B cell (primary cell): ENCODE measurements at regions of chr7 and their contacts with region 1.

Region 1: GRCh38 chr7:44082541-44083207 is 344 bp upstream of the POLM start:
- DNase-seq: no peak
- ATAC-seq: peak; percentile 91
- H3K4me3 ChIP-seq: peak overlapping the region; percentile 26 to 77 (median 66)
- H3K4me3 Mint-ChIP-seq: peak overlapping the region; percentile 84
- H3K27ac ChIP-seq: peak overlapping the region; percentile 77 to 92
- H3K27ac Mint-ChIP-seq: peak overlapping the region; percentile 93
- H3K4me1 ChIP-seq: peaks cover 38 to 43% of the 10 kb centered on the region in 2 donors
- H3K4me1 Mint-ChIP-seq: peaks cover 45% of the 10 kb centered on the region
- H3K27me3 ChIP-seq: no peaks in the 10 kb centered on the region
- H3K27me3 Mint-ChIP-seq: no peaks in the 10 kb centered on the region
- CTCF ChIP-seq: peak; percentile 34

Region 2: GRCh38 chr7:43362652-43363034 is 720.0 kb before region 1 on chr7:
- CTCF ChIA-PET with region 1: no interaction called
- POLR2A ChIA-PET with region 1: no interaction called
- intact Hi-C with region 1: no loop called
- DNase-seq: no peak
- ATAC-seq: no peak
- H3K4me3 ChIP-seq: no peak overlapping the region
- H3K4me3 Mint-ChIP-seq: no peak overlapping the region
- H3K27ac ChIP-seq: no peak overlapping the region
- H3K27ac Mint-ChIP-seq: no peak overlapping the region
- H3K4me1 ChIP-seq: no peaks in the 10 kb centered on the region
- H3K4me1 Mint-ChIP-seq: no peaks in the 10 kb centered on the region
- H3K27me3 ChIP-seq: peaks cover 0 to 3% (median 2%) of the 10 kb centered on the region in 4 experiments
- H3K27me3 Mint-ChIP-seq: peaks cover 8% of the 10 kb centered on the region
- CTCF ChIP-seq: no peak

Region 3: DNA sequence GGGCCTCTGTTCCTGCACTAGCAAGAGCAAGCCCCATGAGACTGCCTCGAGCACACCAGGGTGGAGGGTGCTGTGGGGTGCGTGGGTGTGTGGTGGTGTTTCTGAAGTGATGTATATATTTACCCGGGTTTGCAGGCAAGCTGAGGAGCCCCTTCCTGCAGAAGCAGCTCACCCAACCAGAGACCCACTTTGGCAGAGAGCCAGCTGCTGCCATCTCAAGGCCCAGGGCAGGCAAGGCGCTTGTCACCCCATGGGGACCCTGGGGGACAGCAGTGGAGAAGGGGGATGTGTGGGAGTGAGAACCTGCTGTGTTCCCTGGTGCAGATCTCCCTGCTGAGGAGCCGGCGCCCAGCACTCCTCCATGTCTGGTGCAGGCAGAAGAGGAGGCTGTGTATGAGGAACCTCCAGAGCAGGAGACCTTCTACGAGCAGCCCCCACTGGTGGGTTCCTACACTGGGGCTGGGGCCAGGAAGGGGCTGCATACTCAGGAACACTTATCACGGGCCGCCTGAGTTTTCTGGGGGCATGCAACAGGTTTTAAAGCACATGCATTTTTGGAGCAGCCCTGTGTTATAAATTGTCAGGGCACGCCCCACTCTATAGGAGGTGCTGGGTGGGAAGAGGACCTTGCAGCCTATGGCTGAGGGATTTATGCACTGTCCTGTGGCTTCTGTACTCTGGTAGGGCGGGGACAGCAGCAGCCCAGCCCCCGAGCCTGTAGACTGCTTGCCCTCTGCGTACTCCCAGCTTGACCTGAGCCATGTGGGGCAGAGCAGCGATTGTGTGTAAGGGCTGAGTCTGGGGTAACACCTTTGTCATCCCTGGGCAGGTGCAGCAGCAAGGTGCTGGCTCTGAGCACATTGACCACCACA is 23.2 kb before region 1 on chr7:
- CTCF ChIA-PET with region 1: interaction called, 5 read pairs
- POLR2A ChIA-PET with region 1: interaction called, 11 read pairs
- intact Hi-C with region 1: loop called (anchors 1 kb)
- DNase-seq: peak; percentile 83
- ATAC-seq: peak; percentile 89
- H3K4me3 ChIP-seq: peak overlapping the region in 3 of 5 experiments; percentile 7 to 15 (median 12)
- H3K4me3 Mint-ChIP-seq: peak overlapping the region; percentile 88
- H3K27ac ChIP-seq: peak overlapping the region; percentile 93 to 99
- H3K27ac Mint-ChIP-seq: peak overlapping the region; percentile 100
- H3K4me1 ChIP-seq: peaks cover 73 to 93% of the 10 kb centered on the region in 2 donors
- H3K4me1 Mint-ChIP-seq: peaks cover 75% of the 10 kb centered on the region
- H3K27me3 ChIP-seq: no peaks in the 10 kb centered on the region
- H3K27me3 Mint-ChIP-seq: no peaks in the 10 kb centered on the region
- CTCF ChIP-seq: no peak

Region 4: GRCh38 chr7:44097064-44097932 is 14.6 kb after region 1 on chr7:
- CTCF ChIA-PET with region 1: interaction called, 4 read pairs
- POLR2A ChIA-PET with region 1: interaction called, 21 read pairs
- intact Hi-C with region 1: loop called (anchors 1 kb)
- DNase-seq: peak; percentile 80
- ATAC-seq: peak; percentile 87
- H3K4me3 ChIP-seq: no peak overlapping the region
- H3K4me3 Mint-ChIP-seq: peak overlapping the region; percentile 57
- H3K27ac ChIP-seq: peak overlapping the region; percentile 78 to 84
- H3K27ac Mint-ChIP-seq: peak overlapping the region; percentile 87
- H3K4me1 ChIP-seq: peaks cover 40 to 83% of the 10 kb centered on the region in 2 donors
- H3K4me1 Mint-ChIP-seq: peaks cover 77% of the 10 kb centered on the region
- H3K27me3 ChIP-seq: no peaks in the 10 kb centered on the region
- H3K27me3 Mint-ChIP-seq: no peaks in the 10 kb centered on the region
- CTCF ChIP-seq: no peak

Region 5: DNA sequence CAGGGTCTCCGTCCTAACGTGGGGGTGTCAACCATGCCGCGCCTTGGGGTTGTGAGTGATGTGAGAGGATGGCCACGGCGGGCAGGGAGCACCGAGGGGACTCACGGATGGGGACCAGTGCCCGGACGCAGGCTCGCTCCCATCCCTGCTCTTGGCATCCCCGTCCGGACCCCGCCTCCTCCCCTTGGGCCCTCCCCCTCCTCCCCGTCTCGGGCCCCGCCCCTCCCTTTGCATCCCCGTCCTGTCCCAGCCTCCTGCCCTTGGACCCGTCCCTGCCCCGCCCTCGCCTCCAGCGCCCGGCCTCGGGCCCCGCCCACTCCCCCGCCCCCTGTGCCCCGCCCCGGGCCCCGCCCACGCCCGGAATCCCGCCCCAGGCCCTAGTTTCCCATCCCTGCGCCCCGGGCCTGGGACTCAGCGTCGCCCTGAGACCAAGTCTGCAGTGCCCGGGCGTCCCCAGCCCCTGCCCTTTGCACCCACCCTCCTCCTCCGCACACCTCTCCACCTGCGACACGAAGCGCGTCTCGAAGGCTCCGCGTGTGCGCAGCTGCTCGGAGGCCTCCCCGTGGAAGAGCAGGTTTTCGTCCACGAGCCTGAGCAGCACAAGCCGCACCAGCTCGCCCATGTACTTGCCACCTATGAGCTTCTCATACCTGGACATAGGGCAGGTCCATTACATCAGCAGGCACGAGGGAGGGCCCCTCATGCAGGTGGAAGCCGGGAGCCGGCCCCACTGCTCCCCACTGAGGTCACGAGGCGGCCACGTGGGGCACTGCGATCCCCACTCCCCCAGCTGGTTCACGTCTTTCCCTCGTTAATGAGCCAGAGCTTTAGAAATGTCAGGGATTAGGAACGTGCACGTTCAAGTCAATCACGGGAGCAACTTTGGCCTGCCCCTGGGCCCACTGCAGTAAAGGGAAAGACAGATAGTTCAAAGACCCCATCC is 63.6 kb after region 1 on chr7:
- CTCF ChIA-PET with region 1: no interaction called
- POLR2A ChIA-PET with region 1: no interaction called
- intact Hi-C with region 1: loop called (anchors 1 kb)
- DNase-seq: peak; percentile 64
- ATAC-seq: peak; percentile 91
- H3K4me3 ChIP-seq: peak overlapping the region in 4 of 5 experiments; percentile 40 to 67 (median 55)
- H3K4me3 Mint-ChIP-seq: peak overlapping the region; percentile 85
- H3K27ac ChIP-seq: no peak overlapping the region
- H3K27ac Mint-ChIP-seq: peak overlapping the region; percentile 50
- H3K4me1 ChIP-seq: peaks cover 13 to 28% of the 10 kb centered on the region in 2 donors
- H3K4me1 Mint-ChIP-seq: peaks cover 17% of the 10 kb centered on the region
- H3K27me3 ChIP-seq: peaks cover 0 to 24% (median 6%) of the 10 kb centered on the region in 4 experiments
- H3K27me3 Mint-ChIP-seq: no peaks in the 10 kb centered on the region
- CTCF ChIP-seq: no peak